ENCODE measurements at regions of chr11 and their contacts with region 1.

Region 1: DNA sequence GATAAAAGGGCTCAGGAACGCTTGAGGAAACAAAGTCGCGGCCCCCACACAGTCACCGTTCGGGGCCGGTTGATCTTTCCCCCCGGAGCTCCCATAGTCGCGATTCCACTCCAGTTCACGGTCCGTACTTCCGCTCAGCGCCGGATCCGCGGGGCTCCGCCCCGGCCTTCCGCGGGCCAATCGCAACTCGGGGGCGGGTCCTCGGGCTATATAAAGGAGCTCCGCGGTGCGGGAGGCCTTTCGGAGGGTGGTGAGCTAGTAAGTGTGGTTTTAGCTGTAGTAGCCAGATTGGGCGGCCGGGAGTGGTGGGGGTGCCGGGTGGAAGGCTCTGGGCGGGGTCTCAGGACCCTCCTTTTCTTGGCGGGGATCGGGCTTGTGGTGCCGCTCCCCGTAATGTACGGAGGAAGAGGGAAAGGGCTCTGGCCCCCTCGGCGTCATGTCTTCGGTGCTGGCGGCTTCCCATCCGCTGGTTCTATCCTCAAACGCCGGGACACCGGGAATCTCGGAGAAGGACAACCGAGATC is at the starts of genes C11orf98 and CSKMT:
- DNase-seq: peak; percentile 93 to 97
- ATAC-seq: peak; percentile 89 to 92
- H3K4me3 ChIP-seq: peak within 1 kb of the TSS; percentile 79
- H3K27ac ChIP-seq: peak within 1 kb of the TSS; percentile 93 to 96
- H3K4me1 ChIP-seq: peaks cover 30% of the 10 kb centered on the region
- CTCF ChIP-seq: no peak
- EP300 ChIP-seq: no peak
- POLR2A ChIP-seq: peak; percentile 97
- RAD21 ChIP-seq: no peak
- polyA plus RNA-seq, gene C11orf98: 89.1 and 91.7 TPM in 2 replicates
- polyA plus RNA-seq, gene CSKMT: 5.4 and 5.7 TPM in 2 replicates

Region 2: GRCh38 chr11:62573592-62574362 is 91.4 kb before region 1 on chr11 and contains the start of gene EEF1G:
- CTCF ChIA-PET with region 1: interaction called, 3 read pairs
- POLR2A ChIA-PET with region 1: interaction called, 11 read pairs
- DNase-seq: peak; percentile 99 to 100
- ATAC-seq: peak; percentile 91 to 96
- H3K4me3 ChIP-seq: peak within 1 kb of the TSS; percentile 97
- H3K27ac ChIP-seq: peak within 1 kb of the TSS; percentile 93 to 94
- H3K4me1 ChIP-seq: peaks cover 41% of the 10 kb centered on the region
- CTCF ChIP-seq: no peak
- EP300 ChIP-seq: no peak
- POLR2A ChIP-seq: peak; percentile 86
- RAD21 ChIP-seq: no peak
- polyA plus RNA-seq, gene EEF1G: 1,728 and 1,795 TPM in 2 replicates

Region 3: DNA sequence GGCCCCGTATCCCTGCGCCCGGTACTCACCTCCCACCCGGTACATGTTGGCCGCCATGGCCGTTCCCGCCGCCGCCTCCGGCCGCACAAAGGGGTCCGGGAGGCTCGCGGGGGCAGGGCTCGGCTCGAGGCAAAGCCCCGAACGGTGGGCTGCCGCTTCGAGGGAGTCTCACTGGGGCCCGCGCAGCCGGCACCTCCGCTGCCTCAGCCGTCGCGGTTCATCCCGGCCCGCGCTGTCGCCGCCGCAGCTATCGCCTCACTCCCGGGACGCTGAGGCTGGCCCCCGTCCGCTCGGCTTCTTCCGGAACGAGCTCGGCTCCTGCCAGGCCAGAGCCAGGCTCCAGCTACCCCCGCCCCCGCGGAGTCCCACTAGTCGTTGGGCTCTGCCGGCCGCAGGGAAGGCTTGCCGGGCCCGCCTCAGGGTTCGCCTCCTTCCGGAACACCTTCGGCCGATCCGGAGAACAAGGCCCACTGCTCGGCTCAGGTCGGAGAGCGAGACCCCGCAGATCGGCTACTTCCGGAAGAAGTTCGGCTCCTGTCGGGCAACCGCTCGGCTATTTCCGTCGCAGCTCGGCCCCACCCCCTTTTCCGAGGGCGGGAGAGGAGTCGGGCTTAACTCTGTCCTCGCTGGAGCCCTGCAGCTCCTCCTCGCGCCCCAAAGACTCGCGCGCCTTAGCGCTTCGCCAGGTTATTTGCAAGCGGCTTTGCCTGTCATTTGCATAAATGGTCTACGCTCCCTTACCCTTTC is 63.6 kb before region 1 on chr11 and contains the start of gene MTA2:
- CTCF ChIA-PET with region 1: no interaction called
- POLR2A ChIA-PET with region 1: interaction called, 18 read pairs
- DNase-seq: peak; percentile 87 to 98
- ATAC-seq: peak; percentile 86 to 92
- H3K4me3 ChIP-seq: peak within 1 kb of the TSS; percentile 92
- H3K27ac ChIP-seq: peak within 1 kb of the TSS; percentile 95 to 98
- H3K4me1 ChIP-seq: peaks cover 32% of the 10 kb centered on the region
- CTCF ChIP-seq: no peak
- EP300 ChIP-seq: no peak
- POLR2A ChIP-seq: peak; percentile 22; the same call in 1 of the 2 replicates
- RAD21 ChIP-seq: no peak
- polyA plus RNA-seq, gene MTA2: 21.8 and 44.3 TPM in 2 replicates

Region 4: DNA sequence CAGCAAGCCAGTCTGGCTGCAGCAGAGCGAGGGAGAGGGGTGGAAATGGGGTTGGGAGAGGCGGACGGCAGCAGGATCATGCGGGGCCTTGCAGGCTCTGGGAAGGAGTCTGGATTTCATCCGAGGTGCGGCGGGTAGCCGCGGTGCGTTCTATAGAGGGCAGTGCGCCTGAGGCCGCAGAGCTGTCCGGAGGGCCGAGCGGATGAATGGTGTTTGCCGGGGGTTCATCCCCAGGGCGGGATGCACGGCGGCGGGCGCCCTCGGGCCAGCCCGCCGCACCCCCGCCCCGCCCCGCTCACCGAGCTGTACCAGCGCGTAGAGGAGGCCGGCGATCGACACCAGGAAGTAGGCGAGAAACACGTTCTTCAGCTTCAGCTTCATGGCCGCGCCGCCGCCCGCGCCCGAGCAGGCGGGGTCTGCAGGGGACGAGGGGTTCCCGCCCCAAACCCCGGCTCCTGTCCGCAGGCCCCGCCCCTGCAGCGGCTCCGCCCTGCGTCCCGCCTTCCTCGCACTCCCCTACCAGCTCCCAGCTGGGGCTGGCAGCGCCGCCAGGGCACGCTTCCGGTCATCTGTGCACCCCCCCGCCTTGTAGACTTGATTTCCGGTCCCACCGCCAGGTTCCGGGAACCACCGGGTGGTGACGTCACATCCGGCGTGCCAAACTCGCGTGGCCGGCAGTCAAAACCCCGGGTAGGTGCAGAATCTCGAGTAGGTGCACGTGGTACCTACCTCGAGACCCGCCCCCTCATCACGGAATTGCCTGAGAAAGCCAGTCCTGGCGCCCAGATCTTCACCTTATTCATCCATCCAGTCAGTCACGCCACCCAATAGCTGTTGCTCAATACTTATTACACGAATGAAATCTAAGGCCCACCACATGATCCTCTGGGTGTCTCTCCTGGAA is 43.3 kb before region 1 on chr11 and contains the start of gene B3GAT3:
- CTCF ChIA-PET with region 1: interaction called, 3 read pairs
- POLR2A ChIA-PET with region 1: interaction called, 24 read pairs
- DNase-seq: peak; percentile 99
- ATAC-seq: peak; percentile 96 to 97
- H3K4me3 ChIP-seq: peak within 1 kb of the TSS; percentile 77
- H3K27ac ChIP-seq: peak within 1 kb of the TSS; percentile 92
- H3K4me1 ChIP-seq: peaks cover 15% of the 10 kb centered on the region
- CTCF ChIP-seq: 0 out of 3 replicates have a peak, but pooled peaks have one; percentile 6
- EP300 ChIP-seq: no peak
- POLR2A ChIP-seq: peak; percentile 80
- RAD21 ChIP-seq: no peak
- polyA plus RNA-seq, gene B3GAT3: 19.0 and 20.5 TPM in 2 replicates

Region 5: DNA sequence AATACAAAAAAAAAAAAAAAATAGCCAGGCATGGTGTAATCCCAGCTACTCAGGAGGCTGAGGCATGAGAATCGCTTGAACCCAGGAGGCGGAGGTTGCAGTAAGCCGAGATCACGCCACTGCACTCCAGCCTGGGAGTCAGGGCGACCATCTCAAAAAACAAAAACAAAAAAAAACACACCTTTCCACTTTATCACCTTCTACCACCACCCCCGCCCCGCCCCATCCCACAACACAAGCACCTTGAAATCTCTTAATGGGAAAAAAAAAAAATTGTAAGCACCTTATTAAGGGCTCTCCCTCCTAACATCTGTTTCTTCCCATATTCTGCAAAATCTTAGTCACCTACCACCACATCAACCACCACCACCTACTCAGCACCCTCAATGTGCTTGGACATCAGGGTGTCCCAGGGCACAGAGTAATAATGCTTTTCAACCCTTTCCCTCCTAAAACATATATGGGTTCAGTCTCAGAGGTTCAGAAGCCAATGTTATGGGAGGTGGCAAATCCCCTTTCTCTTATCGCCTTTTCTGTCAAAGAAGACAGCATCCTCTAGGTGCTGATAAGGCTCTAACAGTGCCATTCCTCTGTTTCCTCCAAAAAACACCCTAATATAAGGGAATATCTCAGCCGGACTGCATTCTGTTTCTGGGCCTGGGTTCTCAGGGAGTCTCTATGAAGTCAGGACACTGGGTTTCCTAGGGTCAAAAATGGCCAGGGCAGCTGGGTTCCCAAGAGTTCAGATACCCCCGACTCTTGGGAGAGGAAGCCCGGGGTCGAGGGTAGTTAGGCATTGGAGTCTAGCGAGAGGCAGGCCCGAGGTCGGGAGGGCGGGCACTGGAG is 12.8 kb before region 1 on chr11:
- CTCF ChIA-PET with region 1: interaction called, 8 read pairs
- POLR2A ChIA-PET with region 1: interaction called, 91 read pairs
- DNase-seq: no peak
- ATAC-seq: peak in 1 of 2 experiments; percentile 60; a peak in 3 of 6 replicates
- H3K4me3 ChIP-seq: peak overlapping the region; percentile 75
- H3K27ac ChIP-seq: peak overlapping the region; percentile 85 to 97
- H3K4me1 ChIP-seq: peaks cover 10% of the 10 kb centered on the region; the same call in 2 of the 3 replicates
- CTCF ChIP-seq: no peak
- EP300 ChIP-seq: no peak
- POLR2A ChIP-seq: no peak
- RAD21 ChIP-seq: no peak

Region 6: GRCh38 chr11:62705880-62706849 is 41.0 kb after region 1 on chr11:
- CTCF ChIA-PET with region 1: interaction called, 4 read pairs
- POLR2A ChIA-PET with region 1: interaction called, 27 read pairs
- DNase-seq: peak; percentile 87 to 90
- ATAC-seq: peak; percentile 73 to 87
- H3K4me3 ChIP-seq: peak overlapping the region; percentile 69
- H3K27ac ChIP-seq: peak overlapping the region; percentile 80 to 92
- H3K4me1 ChIP-seq: peaks cover 26% of the 10 kb centered on the region
- CTCF ChIP-seq: no peak
- EP300 ChIP-seq: no peak
- POLR2A ChIP-seq: peak; percentile 66
- RAD21 ChIP-seq: no peak

Region 7: GRCh38 chr11:62753736-62754603 is 88.8 kb after region 1 on chr11 and contains the start of gene ZBTB3:
- CTCF ChIA-PET with region 1: no interaction called
- POLR2A ChIA-PET with region 1: interaction called, 29 read pairs
- DNase-seq: peak; percentile 99 to 100
- ATAC-seq: peak; percentile 98 to 99
- H3K4me3 ChIP-seq: peak within 1 kb of the TSS; percentile 55
- H3K27ac ChIP-seq: peak within 1 kb of the TSS; percentile 92 to 94
- H3K4me1 ChIP-seq: peaks cover 11% of the 10 kb centered on the region; the same call in 1 of the 3 replicates
- CTCF ChIP-seq: no peak
- EP300 ChIP-seq: no peak
- POLR2A ChIP-seq: peak; percentile 86
- RAD21 ChIP-seq: no peak
- polyA plus RNA-seq, gene ZBTB3: 3.0 and 3.1 TPM in 2 replicates